Adrenal gland (tissue), 19 donors: ENCODE measurements at regions of chr2 and their contacts with region 1.

Region 1: GRCh38 chr2:96860065-96861043 is 2.5 kb upstream of the ANKRD39 start:
- DNase-seq: no peak
- H3K4me3 ChIP-seq: no peak overlapping the region
- H3K27ac ChIP-seq: peak overlapping the region in 1 of 5 donors; percentile 75
- H3K4me1 ChIP-seq: peaks cover 12 to 29% of the 10 kb centered on the region in 2 donors
- H3K27me3 ChIP-seq: no peaks in the 10 kb centered on the region
- CTCF ChIP-seq: no peak
- POLR2A ChIP-seq: no peak

Region 2: DNA sequence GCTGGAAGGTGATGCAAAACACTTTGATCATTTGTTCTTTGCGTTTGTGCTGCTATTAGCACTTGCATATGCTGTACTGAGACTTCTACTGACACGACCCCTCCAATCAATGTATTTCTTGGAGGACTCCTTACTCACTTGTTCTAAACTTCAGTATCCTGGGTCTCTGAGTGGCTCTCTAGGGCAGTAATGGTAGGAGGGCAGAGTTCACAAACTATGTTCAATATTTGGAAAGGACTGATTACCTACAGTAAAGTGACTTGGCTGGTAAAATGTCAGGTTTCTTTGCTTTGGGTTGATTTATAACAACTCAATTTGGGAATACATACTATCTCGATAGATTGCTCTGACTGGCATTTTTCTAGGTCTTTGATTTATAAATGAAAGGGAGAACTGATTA is 1174.8 kb before region 1 on chr2:
- intact Hi-C with region 1: no loop called
- DNase-seq: no peak
- H3K4me3 ChIP-seq: no peak overlapping the region
- H3K27ac ChIP-seq: peak overlapping the region in 2 of 5 donors; percentile 27 to 78
- H3K4me1 ChIP-seq: peaks cover 3 to 13% of the 10 kb centered on the region in 2 donors
- H3K27me3 ChIP-seq: no peaks in the 10 kb centered on the region
- CTCF ChIP-seq: no peak
- POLR2A ChIP-seq: no peak

Region 3: GRCh38 chr2:96353032-96353561 is 507.3 kb before region 1 on chr2:
- intact Hi-C with region 1: no loop called
- DNase-seq: peak in 6 of 7 donors; percentile 45 to 81 (median 56)
- H3K4me3 ChIP-seq: no peak overlapping the region
- H3K27ac ChIP-seq: peak overlapping the region in 2 of 5 donors; percentile 64 to 77
- H3K4me1 ChIP-seq: peaks cover 0 to 7% of the 10 kb centered on the region in 2 donors
- H3K27me3 ChIP-seq: no peaks in the 10 kb centered on the region
- CTCF ChIP-seq: no peak
- POLR2A ChIP-seq: no peak

Region 4: GRCh38 chr2:96783388-96783787 is 77.0 kb before region 1 on chr2:
- intact Hi-C with region 1: no loop called
- DNase-seq: no peak
- H3K4me3 ChIP-seq: no peak overlapping the region
- H3K27ac ChIP-seq: no peak overlapping the region
- H3K4me1 ChIP-seq: peaks cover 10 to 20% of the 10 kb centered on the region in 2 donors
- H3K27me3 ChIP-seq: no peaks in the 10 kb centered on the region
- CTCF ChIP-seq: no peak
- POLR2A ChIP-seq: no peak

Region 5: DNA sequence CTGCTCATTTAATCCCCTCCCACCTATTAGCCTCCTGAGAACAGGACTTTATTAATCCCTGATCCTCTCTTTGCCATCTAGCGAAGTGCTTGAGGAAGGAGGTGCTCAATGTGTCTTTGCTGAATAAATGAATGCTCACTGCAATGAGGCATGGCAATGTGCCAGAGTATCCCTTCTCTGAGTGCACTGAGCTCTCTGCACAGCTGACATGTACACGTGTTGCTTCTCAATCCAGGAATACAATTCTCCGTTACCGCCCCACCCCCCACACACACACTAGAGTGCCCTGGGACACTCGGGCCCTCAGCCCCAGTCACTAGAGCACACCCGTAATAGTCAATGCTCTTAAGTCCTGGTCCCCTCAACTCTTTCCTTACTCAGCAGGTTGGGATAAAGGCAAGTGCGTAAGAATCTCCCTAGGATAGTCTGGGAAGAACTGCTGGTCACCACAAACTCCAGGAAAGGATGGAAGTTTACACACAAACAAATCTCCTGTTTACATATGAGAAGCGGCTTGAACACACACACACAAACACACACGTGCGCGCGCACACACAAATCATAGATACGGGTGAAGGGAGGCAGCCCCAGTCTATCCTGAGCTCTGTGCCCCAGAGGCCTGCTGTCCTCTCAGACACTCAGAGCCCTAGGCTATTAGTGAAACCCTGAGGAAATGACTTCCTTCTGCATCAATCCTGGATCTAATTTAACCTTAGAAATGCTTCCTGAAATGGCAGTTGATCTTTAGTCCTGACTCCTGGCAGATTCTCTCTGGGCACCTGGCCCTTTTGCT is 84.9 kb after region 1 on chr2:
- intact Hi-C with region 1: loop called (anchors 5 kb)
- DNase-seq: no peak
- H3K4me3 ChIP-seq: no peak overlapping the region
- H3K27ac ChIP-seq: no peak overlapping the region
- H3K4me1 ChIP-seq: peaks cover 0 to under 1% of the 10 kb centered on the region in 2 donors
- H3K27me3 ChIP-seq: no peaks in the 10 kb centered on the region
- CTCF ChIP-seq: no peak
- POLR2A ChIP-seq: no peak

Region 6: DNA sequence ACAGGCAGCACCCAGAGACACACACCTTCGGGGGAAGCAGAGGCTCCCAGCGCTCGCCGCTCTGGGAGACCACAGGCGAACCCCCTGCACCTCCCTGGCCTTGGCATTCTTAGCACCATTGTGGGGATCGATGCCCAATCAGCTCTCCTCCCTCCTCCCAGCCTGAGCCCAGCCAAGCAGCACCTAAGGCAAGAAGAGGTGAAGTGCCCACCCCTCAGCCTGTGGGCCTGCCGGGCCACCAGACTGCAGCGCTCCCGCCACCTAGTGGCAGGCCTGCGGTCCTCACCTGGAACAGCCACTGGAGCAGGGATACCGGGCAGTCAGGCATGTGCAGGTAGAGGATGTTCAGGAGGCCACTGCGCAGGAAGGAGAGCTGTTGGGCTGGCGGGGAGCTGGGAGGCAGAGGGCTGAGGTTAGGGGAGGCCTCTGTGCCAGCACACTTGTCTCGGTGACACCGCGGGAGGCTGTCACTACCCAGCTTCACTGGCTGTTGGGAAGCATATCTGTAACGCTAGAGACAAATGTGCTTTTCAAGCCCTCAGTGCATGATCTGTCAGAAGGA is 90.8 kb after region 1 on chr2:
- intact Hi-C with region 1: loop called (anchors 5 kb)
- DNase-seq: peak; percentile 49 to 84 (median 72)
- H3K4me3 ChIP-seq: no peak overlapping the region
- H3K27ac ChIP-seq: no peak overlapping the region
- H3K4me1 ChIP-seq: peaks cover 0 to 27% of the 10 kb centered on the region in 2 donors
- H3K27me3 ChIP-seq: no peaks in the 10 kb centered on the region
- CTCF ChIP-seq: peak; percentile 83 to 94 (median 88)
- POLR2A ChIP-seq: no peak